Panc1 (cell line): ENCODE measurements at regions of chr7 and their contacts with region 1.

Region 1: DNA sequence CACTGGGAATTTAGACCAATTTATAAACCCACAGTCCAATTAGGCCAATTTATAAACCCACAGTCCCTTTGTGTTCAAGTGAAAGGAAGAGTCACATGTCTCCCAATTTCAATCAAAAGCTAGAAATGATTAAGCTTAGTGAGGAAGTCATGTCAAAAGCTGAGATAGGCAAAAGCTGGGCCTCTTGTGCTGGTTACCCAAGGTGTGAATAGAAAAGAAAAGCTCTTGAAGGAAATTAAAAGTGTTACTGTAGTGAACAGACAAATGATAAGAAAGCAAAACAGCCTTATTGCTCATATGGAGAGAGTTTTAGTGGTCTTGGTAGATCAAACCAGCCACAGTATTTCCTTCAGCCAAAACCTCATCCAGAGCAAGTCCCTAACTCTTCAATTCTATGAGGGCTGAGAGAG is 245.0 kb downstream of the HDAC9 start:
- DNase-seq: no peak
- ATAC-seq: no peak
- H3K4me3 ChIP-seq: no peak overlapping the region
- H3K27ac ChIP-seq: no peak overlapping the region
- H3K4me1 ChIP-seq: no peaks in the 10 kb centered on the region
- H3K27me3 ChIP-seq: no peaks in the 10 kb centered on the region
- CTCF ChIP-seq: no peak

Region 2: GRCh38 chr7:18778594-18778993 is 38.0 kb after region 1 on chr7:
- CTCF ChIA-PET with region 1: no interaction called
- POLR2A ChIA-PET with region 1: interaction called, 12 read pairs
- in situ Hi-C with region 1: no loop called
- intact Hi-C with region 1: no loop called
- DNase-seq: no peak
- ATAC-seq: no peak
- H3K4me3 ChIP-seq: no peak overlapping the region
- H3K27ac ChIP-seq: no peak overlapping the region
- H3K4me1 ChIP-seq: no peaks in the 10 kb centered on the region
- H3K27me3 ChIP-seq: no peaks in the 10 kb centered on the region
- CTCF ChIP-seq: no peak

Region 3: DNA sequence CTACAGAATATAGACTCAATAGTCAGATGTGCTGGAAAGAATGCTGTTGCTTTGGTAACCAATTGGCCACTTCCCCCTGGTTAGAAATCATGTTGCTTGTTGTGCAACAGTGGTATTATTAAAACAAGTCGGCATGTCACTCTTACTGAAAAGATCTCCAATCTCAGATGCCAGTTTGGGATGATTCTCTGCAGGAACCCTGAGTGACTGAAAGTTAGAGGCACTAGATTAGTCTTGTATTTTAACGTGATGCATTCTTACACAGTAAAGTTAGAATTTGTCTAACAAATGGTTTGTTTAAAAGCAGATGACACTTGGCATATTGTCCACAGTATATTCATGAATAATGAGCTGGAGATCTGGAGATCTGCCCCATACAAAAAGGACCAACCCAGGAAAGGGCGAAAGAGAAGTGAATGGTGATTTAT is 89.3 kb after region 1 on chr7:
- CTCF ChIA-PET with region 1: no interaction called
- POLR2A ChIA-PET with region 1: no interaction called
- in situ Hi-C with region 1: no loop called
- intact Hi-C with region 1: no loop called
- DNase-seq: no peak
- ATAC-seq: no peak
- H3K4me3 ChIP-seq: no peak overlapping the region
- H3K27ac ChIP-seq: no peak overlapping the region
- H3K4me1 ChIP-seq: no peaks in the 10 kb centered on the region
- H3K27me3 ChIP-seq: no peaks in the 10 kb centered on the region
- CTCF ChIP-seq: no peak